ENCODE measurements at regions of chr2 and their contacts with region 1.

Region 1: GRCh38 chr2:20642055-20642971 is 8.6 kb downstream of the HS1BP3 start:
- DNase-seq: peak; percentile 53 to 77 (median 76)
- H3K4me3 ChIP-seq: no peak overlapping the region
- H3K27ac ChIP-seq: no peak overlapping the region
- H3K4me1 ChIP-seq: peaks cover 0 to 6% (median 0%) of the 10 kb centered on the region in 4 experiments
- H3K27me3 ChIP-seq: no peaks in the 10 kb centered on the region

Region 2: DNA sequence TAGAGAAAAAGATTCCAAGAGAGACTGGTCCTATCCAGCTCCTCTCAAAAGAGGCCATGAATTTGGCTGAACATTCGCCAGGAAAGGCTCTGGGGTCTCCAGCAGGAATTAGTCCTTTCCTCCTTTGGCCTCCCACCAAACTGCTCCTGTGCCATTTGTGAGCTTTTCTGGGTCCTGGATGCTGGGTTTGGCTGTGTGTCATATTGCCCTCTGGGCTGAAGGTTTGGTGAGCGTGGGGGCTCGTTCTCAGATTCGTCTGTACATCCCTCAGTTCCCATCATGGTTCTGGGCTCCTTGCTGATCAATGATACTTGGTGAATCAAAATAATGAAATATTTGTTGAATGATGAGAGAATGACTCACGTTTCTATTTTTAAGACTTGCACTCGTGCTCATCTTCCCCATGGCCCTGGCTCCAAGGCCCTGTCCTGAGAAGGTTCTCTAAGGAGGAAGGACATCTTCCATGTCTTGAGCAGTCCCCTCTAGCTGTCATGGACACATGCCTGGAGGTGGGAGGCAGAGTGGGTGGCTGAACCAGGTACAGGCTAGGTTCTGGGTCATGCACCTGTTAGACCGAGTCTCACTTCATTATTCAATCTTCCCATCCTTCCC is 243.3 kb before region 1 on chr2:
- CTCF ChIA-PET with region 1: interaction called, 24 read pairs
- POLR2A ChIA-PET with region 1: no interaction called
- DNase-seq: no peak
- H3K4me3 ChIP-seq: no peak overlapping the region
- H3K27ac ChIP-seq: no peak overlapping the region
- H3K4me1 ChIP-seq: no peaks in the 10 kb centered on the region
- H3K27me3 ChIP-seq: no peaks in the 10 kb centered on the region

Region 3: GRCh38 chr2:20446917-20447436 is 195.3 kb before region 1 on chr2 and contains the start of gene RHOB:
- CTCF ChIA-PET with region 1: interaction called, 52 read pairs
- POLR2A ChIA-PET with region 1: interaction called, 4 read pairs
- DNase-seq: peak; percentile 97 to 99 (median 98)
- H3K4me3 ChIP-seq: peak within 1 kb of the TSS; percentile 57 to 93 (median 71)
- H3K27ac ChIP-seq: peak within 1 kb of the TSS in 1 of 2 experiments; percentile 54
- H3K4me1 ChIP-seq: peaks cover 0 to 21% (median 17%) of the 10 kb centered on the region in 4 experiments
- H3K27me3 ChIP-seq: peaks cover 7 to 30% (median 27%) of the 10 kb centered on the region in 5 experiments

Region 4: DNA sequence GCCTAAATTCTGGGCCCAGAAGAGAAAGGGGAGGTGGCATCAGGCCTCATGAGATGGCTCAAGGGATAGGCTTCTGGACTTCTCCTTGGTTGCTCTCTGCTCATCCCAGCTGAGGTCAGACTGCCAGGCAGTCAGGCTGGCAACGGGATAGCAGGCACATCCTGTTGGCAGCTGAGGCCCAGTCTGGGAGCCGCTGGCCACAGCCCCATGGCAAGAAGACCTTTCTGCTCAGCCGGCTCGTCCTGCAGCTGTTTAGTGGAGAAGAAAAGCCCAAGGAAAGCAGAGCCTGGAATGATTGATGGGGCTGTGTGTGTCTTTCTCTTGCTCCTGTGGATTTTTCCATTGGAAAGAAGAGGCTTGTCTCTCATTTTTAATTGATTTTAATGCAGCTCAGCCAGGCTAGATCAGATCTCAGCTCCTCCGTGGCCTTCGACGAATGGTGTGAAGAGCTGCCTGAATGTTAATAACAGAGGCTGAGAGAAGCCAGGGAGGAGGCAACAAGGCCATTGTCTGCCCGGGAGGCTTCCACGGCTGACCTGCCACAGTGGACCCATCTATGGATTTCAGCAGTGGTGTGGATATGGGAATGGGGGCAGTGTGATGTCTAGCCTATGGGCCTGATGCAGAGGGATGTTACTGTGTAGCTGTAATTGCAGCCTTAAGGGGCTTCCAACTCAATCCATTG is 90.9 kb before region 1 on chr2:
- CTCF ChIA-PET with region 1: no interaction called
- POLR2A ChIA-PET with region 1: no interaction called
- DNase-seq: no peak
- H3K4me3 ChIP-seq: no peak overlapping the region
- H3K27ac ChIP-seq: no peak overlapping the region
- H3K4me1 ChIP-seq: no peaks in the 10 kb centered on the region
- H3K27me3 ChIP-seq: peaks cover 0 to 3% (median 0%) of the 10 kb centered on the region in 5 experiments

Region 5: GRCh38 chr2:20617892-20618467 is 24.3 kb before region 1 on chr2:
- CTCF ChIA-PET with region 1: interaction called, 26 read pairs
- POLR2A ChIA-PET with region 1: no interaction called
- DNase-seq: peak in 2 of 3 donors; percentile 26 to 41
- H3K4me3 ChIP-seq: no peak overlapping the region
- H3K27ac ChIP-seq: no peak overlapping the region
- H3K4me1 ChIP-seq: peaks cover 0 to 24% (median 15%) of the 10 kb centered on the region in 4 experiments
- H3K27me3 ChIP-seq: no peaks in the 10 kb centered on the region

Region 6: GRCh38 chr2:20625491-20626391 is 16.6 kb before region 1 on chr2:
- CTCF ChIA-PET with region 1: interaction called, 14 read pairs
- POLR2A ChIA-PET with region 1: no interaction called
- DNase-seq: no peak
- H3K4me3 ChIP-seq: no peak overlapping the region
- H3K27ac ChIP-seq: no peak overlapping the region
- H3K4me1 ChIP-seq: no peaks in the 10 kb centered on the region
- H3K27me3 ChIP-seq: no peaks in the 10 kb centered on the region

Measured in common myeloid progenitor, CD34-positive (primary cell).